ENCODE measurements at regions of chr3 and their contacts with region 1.

Region 1: DNA sequence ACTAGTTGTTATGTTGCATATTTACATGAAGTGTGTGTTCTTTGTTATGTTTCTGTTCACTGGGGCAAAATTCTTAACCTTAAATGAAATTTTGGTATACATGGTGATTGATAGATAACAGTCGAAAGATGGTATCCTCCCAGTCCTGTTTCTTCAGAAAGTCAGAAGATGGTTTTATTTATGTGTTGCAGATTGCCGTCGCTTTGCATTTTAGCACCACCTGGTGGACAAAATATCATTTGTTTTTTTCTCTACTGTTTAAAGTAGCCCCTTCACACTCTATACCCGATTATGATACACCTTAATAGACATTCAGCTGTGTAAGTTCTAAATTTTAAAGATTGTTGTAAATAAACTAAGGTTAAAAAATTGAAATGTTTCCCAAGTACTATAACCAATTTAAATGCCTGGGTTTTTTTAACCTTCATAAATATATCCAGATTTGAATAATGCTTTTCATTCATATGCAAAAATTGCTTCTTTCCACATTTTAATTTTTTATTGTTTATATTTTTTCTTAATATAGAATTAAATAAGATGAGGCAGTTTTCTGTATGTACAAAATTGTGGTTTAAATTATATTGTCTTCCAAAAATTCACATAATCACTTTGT is 152.2 kb downstream of the ALCAM start:
- DNase-seq: peak in 7 of 9 donors; percentile 10 to 52 (median 48)
- ATAC-seq: peak; percentile 69
- H3K4me3 ChIP-seq: no peak overlapping the region
- H3K4me3 Mint-ChIP-seq: no peak overlapping the region
- H3K27ac ChIP-seq: no peak overlapping the region
- H3K27ac Mint-ChIP-seq: no peak overlapping the region
- H3K4me1 ChIP-seq: no peaks in the 10 kb centered on the region
- H3K4me1 Mint-ChIP-seq: peaks cover 0 to 5% (median 4%) of the 10 kb centered on the region in 7 donors
- H3K27me3 ChIP-seq: no peaks in the 10 kb centered on the region
- H3K27me3 Mint-ChIP-seq: no peaks in the 10 kb centered on the region

Region 2: DNA sequence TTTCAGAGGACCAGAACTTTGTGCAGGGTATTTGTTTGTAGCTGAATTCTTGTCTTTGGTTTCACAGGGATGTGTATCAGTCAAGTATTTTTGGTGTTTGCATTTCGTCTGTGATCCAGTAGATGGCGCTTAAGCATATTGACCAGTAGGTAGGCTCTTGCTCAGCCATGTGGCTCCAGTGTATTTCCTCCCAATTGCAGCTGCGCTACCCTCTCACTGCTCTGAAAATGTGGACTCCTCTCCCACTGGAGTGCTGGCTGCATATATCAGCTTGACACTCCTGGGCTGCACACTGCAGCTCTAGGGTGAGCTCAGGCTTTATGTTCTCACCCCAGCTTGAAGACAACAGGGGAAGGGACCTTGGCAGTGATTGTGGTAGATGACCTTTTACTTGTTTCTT is 1416.5 kb before region 1 on chr3:
- CTCF ChIA-PET with region 1: no interaction called
- POLR2A ChIA-PET with region 1: no interaction called
- intact Hi-C with region 1: loop called in 1 of 2 experiments (anchors 5 kb)
- DNase-seq: no peak
- ATAC-seq: no peak
- H3K4me3 ChIP-seq: no peak overlapping the region
- H3K4me3 Mint-ChIP-seq: no peak overlapping the region
- H3K27ac ChIP-seq: no peak overlapping the region
- H3K27ac Mint-ChIP-seq: no peak overlapping the region
- H3K4me1 ChIP-seq: no peaks in the 10 kb centered on the region
- H3K4me1 Mint-ChIP-seq: no peaks in the 10 kb centered on the region
- H3K27me3 ChIP-seq: no peaks in the 10 kb centered on the region
- H3K27me3 Mint-ChIP-seq: no peaks in the 10 kb centered on the region

Region 3: DNA sequence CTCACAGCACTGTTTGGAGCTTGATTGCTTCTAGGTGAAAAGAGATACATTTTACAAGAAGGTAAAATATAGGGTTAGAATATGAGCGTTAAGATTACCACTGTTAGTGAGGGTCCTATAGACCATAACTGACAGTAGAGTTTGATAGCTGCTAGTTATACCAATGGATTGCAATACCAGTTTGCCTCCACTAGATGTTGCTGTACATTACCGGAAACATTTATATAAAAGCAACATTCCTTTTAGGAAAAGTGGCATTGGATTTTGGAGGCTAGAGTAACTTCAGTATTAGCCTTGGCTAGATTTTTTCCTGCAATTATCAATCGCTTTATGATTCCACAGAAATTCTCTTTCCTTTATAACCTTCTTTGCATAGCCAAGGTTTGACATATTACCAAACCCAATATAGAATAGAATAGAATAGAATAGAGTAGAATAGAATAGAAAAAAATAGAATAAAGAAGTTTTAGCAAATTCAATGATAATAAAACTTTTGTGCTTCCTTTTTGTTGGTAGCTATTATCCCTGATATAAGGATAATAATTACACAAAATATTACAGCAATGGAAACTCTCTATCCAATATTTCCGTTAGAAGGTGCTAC is 1245.8 kb before region 1 on chr3:
- CTCF ChIA-PET with region 1: no interaction called
- POLR2A ChIA-PET with region 1: no interaction called
- intact Hi-C with region 1: loop called in 1 of 2 experiments (anchors 2 kb)
- DNase-seq: no peak
- ATAC-seq: no peak
- H3K4me3 ChIP-seq: no peak overlapping the region
- H3K4me3 Mint-ChIP-seq: no peak overlapping the region
- H3K27ac ChIP-seq: no peak overlapping the region
- H3K27ac Mint-ChIP-seq: no peak overlapping the region
- H3K4me1 ChIP-seq: no peaks in the 10 kb centered on the region
- H3K4me1 Mint-ChIP-seq: no peaks in the 10 kb centered on the region
- H3K27me3 ChIP-seq: no peaks in the 10 kb centered on the region
- H3K27me3 Mint-ChIP-seq: peaks cover 0 to 3% (median 0%) of the 10 kb centered on the region in 5 donors

Region 4: DNA sequence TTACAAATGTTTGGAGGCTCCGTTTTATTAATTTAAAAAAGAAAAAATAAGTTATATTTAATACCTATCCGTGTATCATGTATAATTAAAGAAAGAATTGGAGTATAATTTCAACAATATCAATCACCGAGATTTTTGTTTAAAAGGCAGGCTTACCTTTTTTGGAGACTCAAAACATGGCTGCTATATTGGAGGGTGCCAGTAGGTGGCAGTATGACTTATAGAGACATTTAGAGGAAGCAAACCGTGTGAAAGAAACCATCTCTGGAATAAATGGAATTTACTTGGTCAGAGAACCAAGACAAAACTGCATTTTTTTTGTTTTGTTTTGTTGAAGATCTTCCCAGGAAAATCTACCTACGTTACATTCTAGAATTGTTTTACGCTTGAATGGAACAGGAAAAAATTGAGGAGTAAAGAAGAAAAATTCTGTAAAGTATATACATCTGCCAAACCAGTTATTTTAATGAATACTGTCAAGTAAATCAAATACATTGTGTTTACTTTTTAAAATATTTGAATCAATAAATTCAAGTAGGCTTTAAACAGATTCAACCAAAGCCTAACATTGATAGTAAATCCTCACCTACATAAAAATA is 954.8 kb before region 1 on chr3:
- CTCF ChIA-PET with region 1: interaction called, 3 read pairs
- POLR2A ChIA-PET with region 1: no interaction called
- intact Hi-C with region 1: loop called (anchors 1 to 5 kb)
- DNase-seq: peak in 8 of 9 donors; percentile 9 to 52 (median 45)
- ATAC-seq: peak; percentile 67
- H3K4me3 ChIP-seq: no peak overlapping the region
- H3K4me3 Mint-ChIP-seq: no peak overlapping the region
- H3K27ac ChIP-seq: no peak overlapping the region
- H3K27ac Mint-ChIP-seq: no peak overlapping the region
- H3K4me1 ChIP-seq: no peaks in the 10 kb centered on the region
- H3K4me1 Mint-ChIP-seq: no peaks in the 10 kb centered on the region
- H3K27me3 ChIP-seq: no peaks in the 10 kb centered on the region
- H3K27me3 Mint-ChIP-seq: peaks cover 0 to 8% (median 5%) of the 10 kb centered on the region in 5 donors

Region 5: DNA sequence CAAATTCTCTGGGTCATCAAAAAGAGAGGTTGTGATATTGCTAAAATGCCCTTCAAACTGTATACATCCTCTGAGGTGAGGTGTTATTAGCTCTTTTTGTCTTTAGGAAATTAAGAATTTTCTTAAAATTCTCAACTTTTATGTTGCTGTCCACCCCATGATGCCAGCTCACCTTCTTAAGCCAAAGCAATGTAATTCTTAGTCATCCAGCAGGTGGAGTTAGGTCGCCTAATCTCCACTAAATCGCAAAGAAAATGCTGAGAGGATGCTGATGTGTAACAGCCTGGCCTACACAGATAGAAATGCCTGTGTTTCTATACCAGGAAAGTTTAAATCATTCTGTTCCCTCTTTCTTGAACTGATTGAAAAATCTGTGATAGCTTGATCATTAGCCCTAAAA is 922.4 kb before region 1 on chr3:
- CTCF ChIA-PET with region 1: interaction called, 4 read pairs
- POLR2A ChIA-PET with region 1: no interaction called
- intact Hi-C with region 1: loop called (anchors 1 to 10 kb)
- DNase-seq: peak in 5 of 9 donors; percentile 6 to 17 (median 13)
- ATAC-seq: peak; percentile 52
- H3K4me3 ChIP-seq: no peak overlapping the region
- H3K4me3 Mint-ChIP-seq: no peak overlapping the region
- H3K27ac ChIP-seq: no peak overlapping the region
- H3K27ac Mint-ChIP-seq: no peak overlapping the region
- H3K4me1 ChIP-seq: no peaks in the 10 kb centered on the region
- H3K4me1 Mint-ChIP-seq: peaks cover 0 to 5% (median 0%) of the 10 kb centered on the region in 7 donors
- H3K27me3 ChIP-seq: no peaks in the 10 kb centered on the region
- H3K27me3 Mint-ChIP-seq: peaks cover 0 to 6% (median 0%) of the 10 kb centered on the region in 5 donors

Region 6: GRCh38 chr3:106609666-106610301 is 1090.9 kb after region 1 on chr3:
- CTCF ChIA-PET with region 1: no interaction called
- POLR2A ChIA-PET with region 1: no interaction called
- intact Hi-C with region 1: loop called (anchors 1 kb)
- DNase-seq: peak in 8 of 9 donors; percentile 37 to 71 (median 60)
- ATAC-seq: peak; percentile 81
- H3K4me3 ChIP-seq: no peak overlapping the region
- H3K4me3 Mint-ChIP-seq: no peak overlapping the region
- H3K27ac ChIP-seq: no peak overlapping the region
- H3K27ac Mint-ChIP-seq: no peak overlapping the region
- H3K4me1 ChIP-seq: no peaks in the 10 kb centered on the region
- H3K4me1 Mint-ChIP-seq: peaks cover 0 to 12% (median 0%) of the 10 kb centered on the region in 7 donors
- H3K27me3 ChIP-seq: no peaks in the 10 kb centered on the region
- H3K27me3 Mint-ChIP-seq: peaks cover 0 to 4% (median 3%) of the 10 kb centered on the region in 5 donors

Region 7: DNA sequence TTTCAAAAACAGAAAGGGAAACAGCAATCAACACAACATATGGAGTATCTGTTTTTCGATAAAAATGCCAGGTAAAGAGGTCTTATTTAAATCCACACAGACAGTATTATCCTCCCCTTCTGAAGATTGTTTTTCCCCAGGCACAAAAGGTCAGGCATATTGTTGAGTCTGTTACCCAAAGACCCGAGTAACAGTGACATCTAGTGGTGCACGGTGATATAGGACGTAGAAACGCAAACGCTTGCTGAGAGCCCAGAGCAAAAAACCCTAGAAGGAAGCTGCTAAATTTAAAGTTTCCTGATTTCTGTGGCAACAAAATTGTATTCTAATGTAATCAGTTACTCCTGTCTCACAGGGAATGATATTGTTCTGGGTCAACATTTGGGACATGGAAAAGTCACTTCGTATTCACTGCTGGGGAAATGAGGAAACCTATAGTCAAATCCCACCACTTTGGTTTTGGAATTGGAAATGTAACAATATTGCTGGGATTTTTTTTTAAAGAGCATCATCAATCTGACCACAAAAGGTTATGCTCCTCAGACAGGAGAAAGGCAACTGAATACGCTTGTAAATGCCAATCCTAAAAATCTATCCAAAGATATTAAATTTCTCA is 1545.6 kb after region 1 on chr3:
- CTCF ChIA-PET with region 1: no interaction called
- POLR2A ChIA-PET with region 1: no interaction called
- intact Hi-C with region 1: loop called (anchors 5 kb)
- DNase-seq: peak; percentile 6 to 57 (median 39)
- ATAC-seq: peak; percentile 82
- H3K4me3 ChIP-seq: no peak overlapping the region
- H3K4me3 Mint-ChIP-seq: no peak overlapping the region
- H3K27ac ChIP-seq: no peak overlapping the region
- H3K27ac Mint-ChIP-seq: no peak overlapping the region
- H3K4me1 ChIP-seq: peaks cover 4 to 7% of the 10 kb centered on the region in 2 donors
- H3K4me1 Mint-ChIP-seq: peaks cover 6 to 15% (median 10%) of the 10 kb centered on the region in 7 donors
- H3K27me3 ChIP-seq: no peaks in the 10 kb centered on the region
- H3K27me3 Mint-ChIP-seq: peaks cover 0 to 17% (median 8%) of the 10 kb centered on the region in 5 donors